ENCODE measurements at regions of chr9 and their contacts with region 1.

Region 1: GRCh38 chr9:33404788-33405362 is 2.5 kb upstream of the AQP7 start:
- DNase-seq: no peak
- ATAC-seq: peak; percentile 70
- H3K4me3 ChIP-seq: no peak overlapping the region
- H3K27ac ChIP-seq: no peak overlapping the region
- H3K4me1 ChIP-seq: peaks cover 24% of the 10 kb centered on the region
- H3K27me3 ChIP-seq: peaks cover 7 to 28% of the 10 kb centered on the region in 2 experiments
- CTCF ChIP-seq: no peak; the same call in 1 of the 2 replicates
- EP300 ChIP-seq: no peak
- POLR2A ChIP-seq: no peak
- RAD21 ChIP-seq: no peak

Region 2: DNA sequence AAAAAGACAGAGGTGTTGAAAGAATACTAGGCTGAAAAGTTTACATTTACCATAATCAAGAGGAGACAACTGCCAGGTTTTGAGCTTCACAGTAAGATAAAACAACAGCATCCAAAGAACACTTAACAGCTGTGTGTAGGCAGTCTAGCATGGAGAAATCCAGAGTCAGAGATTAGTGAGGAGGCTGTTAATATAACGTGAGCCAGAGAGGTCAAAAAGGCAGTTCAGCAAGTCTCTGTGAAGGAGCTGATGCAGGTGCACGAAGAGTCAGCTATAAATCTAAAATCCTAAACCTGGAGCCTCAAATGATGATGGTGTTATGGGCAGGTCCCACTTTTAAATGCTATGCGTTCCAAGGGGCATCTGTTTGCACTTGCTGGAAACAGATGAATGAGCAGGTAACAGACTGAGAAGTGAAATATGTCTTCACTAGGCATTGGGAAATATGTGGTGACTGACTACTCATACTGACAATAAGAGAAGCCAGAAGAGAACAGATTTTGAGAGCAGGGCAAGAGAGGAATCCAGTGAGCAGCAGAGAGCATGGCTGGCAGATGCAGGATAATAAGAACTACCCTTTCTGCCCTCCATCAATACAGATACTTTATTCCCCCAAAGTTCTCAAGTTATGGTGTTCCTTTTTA is 412.2 kb before region 1 on chr9:
- CTCF ChIA-PET with region 1: no interaction called
- POLR2A ChIA-PET with region 1: no interaction called
- in situ Hi-C with region 1: no loop called
- intact Hi-C with region 1: no loop called
- DNase-seq: no peak
- ATAC-seq: no peak
- H3K4me3 ChIP-seq: no peak overlapping the region
- H3K27ac ChIP-seq: no peak overlapping the region
- H3K4me1 ChIP-seq: no peaks in the 10 kb centered on the region
- H3K27me3 ChIP-seq: no peaks in the 10 kb centered on the region
- CTCF ChIP-seq: no peak
- EP300 ChIP-seq: no peak
- POLR2A ChIP-seq: no peak
- RAD21 ChIP-seq: no peak

Region 3: DNA sequence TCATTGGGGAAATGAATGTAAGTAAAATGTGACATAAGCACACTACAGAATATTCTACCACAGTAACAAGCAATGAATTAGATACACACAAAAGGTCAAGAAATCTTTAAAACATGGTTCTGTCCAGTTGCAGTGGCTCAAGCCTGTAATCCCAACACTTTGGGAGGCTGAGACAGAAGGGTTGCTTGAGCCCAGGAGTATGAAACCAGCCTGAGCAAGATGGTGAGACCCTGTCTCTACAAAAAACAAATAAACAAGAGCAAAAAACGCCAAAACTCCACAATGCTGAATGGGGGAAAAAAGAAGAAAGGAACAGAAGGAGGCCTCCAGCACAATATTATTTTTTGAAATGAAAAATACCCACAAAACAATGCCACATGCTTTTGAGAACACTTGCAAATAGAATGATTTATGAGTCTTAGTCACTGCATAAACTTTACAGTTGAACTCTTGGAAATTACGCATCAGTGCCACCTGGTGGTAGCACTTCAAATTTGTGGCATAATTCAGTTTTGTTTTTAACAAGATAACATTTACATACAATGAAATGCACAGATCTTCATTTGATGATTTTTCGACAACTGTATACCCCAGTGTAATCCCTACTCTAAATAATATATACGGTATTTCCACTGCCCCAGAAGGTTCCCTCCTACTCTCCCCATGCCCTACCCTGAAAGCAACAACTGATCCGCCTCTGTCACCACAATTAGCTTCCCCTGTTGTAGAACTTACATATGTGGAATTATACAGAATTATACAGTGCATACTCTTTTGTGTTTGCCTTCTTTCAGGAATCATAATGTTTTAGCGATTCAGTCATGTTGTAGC is 179.3 kb before region 1 on chr9:
- CTCF ChIA-PET with region 1: no interaction called
- POLR2A ChIA-PET with region 1: no interaction called
- in situ Hi-C with region 1: no loop called
- intact Hi-C with region 1: no loop called
- DNase-seq: peak; percentile 57
- ATAC-seq: no peak
- H3K4me3 ChIP-seq: no peak overlapping the region
- H3K27ac ChIP-seq: no peak overlapping the region
- H3K4me1 ChIP-seq: peaks cover 30% of the 10 kb centered on the region
- H3K27me3 ChIP-seq: peaks cover 0 to 8% of the 10 kb centered on the region in 2 experiments; a peak in 3 of 5 replicates
- CTCF ChIP-seq: peak; percentile 75
- EP300 ChIP-seq: no peak
- POLR2A ChIP-seq: no peak
- RAD21 ChIP-seq: peak; percentile 78

Region 4: DNA sequence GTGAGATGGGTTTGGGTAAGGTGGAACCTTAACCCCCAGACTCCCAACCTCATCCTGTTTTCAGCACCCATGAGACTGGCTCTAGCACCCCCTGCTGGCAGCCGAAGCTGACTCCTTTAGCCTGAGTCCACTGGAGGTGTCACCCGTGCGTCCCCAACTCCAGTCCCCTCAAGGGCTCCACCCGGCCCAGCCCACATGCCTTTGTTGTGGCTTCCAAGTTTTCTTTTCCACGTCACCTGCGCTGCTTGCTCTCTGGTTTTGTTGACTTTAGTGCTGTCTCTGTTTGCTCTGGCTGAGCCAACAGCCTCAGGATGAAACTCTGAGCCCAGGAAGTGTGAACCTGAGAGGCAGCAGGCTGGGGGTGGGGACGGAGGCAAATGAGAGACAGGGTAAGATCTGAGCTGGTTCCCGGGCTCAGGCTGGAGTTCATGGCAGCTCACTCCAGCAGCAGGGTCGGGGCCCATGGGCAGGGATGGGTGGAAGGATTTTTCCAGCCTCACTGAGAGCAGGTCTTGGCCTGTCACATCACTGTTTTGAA is 10.7 kb after region 1 on chr9:
- CTCF ChIA-PET with region 1: interaction called, 12 read pairs
- POLR2A ChIA-PET with region 1: interaction called, 14 read pairs
- in situ Hi-C with region 1: no loop called
- intact Hi-C with region 1: no loop called
- DNase-seq: peak; percentile 99
- ATAC-seq: peak; percentile 95
- H3K4me3 ChIP-seq: peak overlapping the region in 1 of 3 experiments; percentile 42; a peak in 1 of 6 replicates
- H3K27ac ChIP-seq: no peak overlapping the region
- H3K4me1 ChIP-seq: peaks cover 59% of the 10 kb centered on the region
- H3K27me3 ChIP-seq: peaks cover 3 to 62% of the 10 kb centered on the region in 2 experiments; a peak in 4 of 5 replicates
- CTCF ChIP-seq: peak; percentile 96
- EP300 ChIP-seq: peak; percentile 84 to 98; a peak in 3 of 4 replicates
- POLR2A ChIP-seq: no peak
- RAD21 ChIP-seq: peak; percentile 84

Region 5: GRCh38 chr9:33452828-33453271 is 48.0 kb after region 1 on chr9:
- CTCF ChIA-PET with region 1: interaction called, 21 read pairs
- POLR2A ChIA-PET with region 1: interaction called, 8 read pairs
- in situ Hi-C with region 1: loop called (anchors 5 kb)
- intact Hi-C with region 1: no loop called
- DNase-seq: peak; percentile 73
- ATAC-seq: peak; percentile 89
- H3K4me3 ChIP-seq: no peak overlapping the region; a peak in 1 of 6 replicates
- H3K27ac ChIP-seq: no peak overlapping the region
- H3K4me1 ChIP-seq: peaks cover 33% of the 10 kb centered on the region
- H3K27me3 ChIP-seq: peaks cover 1 to 19% of the 10 kb centered on the region in 2 experiments; a peak in 4 of 5 replicates
- CTCF ChIP-seq: peak; percentile 93
- EP300 ChIP-seq: no peak
- POLR2A ChIP-seq: no peak
- RAD21 ChIP-seq: peak; percentile 80

Region 6: GRCh38 chr9:33473643-33474352 is 68.9 kb after region 1 on chr9 and contains the start of gene NOL6:
- CTCF ChIA-PET with region 1: no interaction called
- POLR2A ChIA-PET with region 1: interaction called, 14 read pairs
- in situ Hi-C with region 1: no loop called
- intact Hi-C with region 1: no loop called
- DNase-seq: peak; percentile 98
- ATAC-seq: peak; percentile 100
- H3K4me3 ChIP-seq: peak within 1 kb of the TSS; percentile 86 to 96 (median 93)
- H3K27ac ChIP-seq: peak within 1 kb of the TSS; percentile 55
- H3K4me1 ChIP-seq: peaks cover 17% of the 10 kb centered on the region
- H3K27me3 ChIP-seq: no peaks in the 10 kb centered on the region; a peak in 1 of 5 replicates
- CTCF ChIP-seq: no peak
- EP300 ChIP-seq: no peak
- POLR2A ChIP-seq: peak; percentile 74 to 85
- RAD21 ChIP-seq: no peak
- total RNA-seq, gene NOL6: 28.6 and 30.2 TPM in 2 replicates